Ascending aorta (tissue), 2 donors: ENCODE measurements at regions of chr6 and their contacts with region 1.

Region 1: DNA sequence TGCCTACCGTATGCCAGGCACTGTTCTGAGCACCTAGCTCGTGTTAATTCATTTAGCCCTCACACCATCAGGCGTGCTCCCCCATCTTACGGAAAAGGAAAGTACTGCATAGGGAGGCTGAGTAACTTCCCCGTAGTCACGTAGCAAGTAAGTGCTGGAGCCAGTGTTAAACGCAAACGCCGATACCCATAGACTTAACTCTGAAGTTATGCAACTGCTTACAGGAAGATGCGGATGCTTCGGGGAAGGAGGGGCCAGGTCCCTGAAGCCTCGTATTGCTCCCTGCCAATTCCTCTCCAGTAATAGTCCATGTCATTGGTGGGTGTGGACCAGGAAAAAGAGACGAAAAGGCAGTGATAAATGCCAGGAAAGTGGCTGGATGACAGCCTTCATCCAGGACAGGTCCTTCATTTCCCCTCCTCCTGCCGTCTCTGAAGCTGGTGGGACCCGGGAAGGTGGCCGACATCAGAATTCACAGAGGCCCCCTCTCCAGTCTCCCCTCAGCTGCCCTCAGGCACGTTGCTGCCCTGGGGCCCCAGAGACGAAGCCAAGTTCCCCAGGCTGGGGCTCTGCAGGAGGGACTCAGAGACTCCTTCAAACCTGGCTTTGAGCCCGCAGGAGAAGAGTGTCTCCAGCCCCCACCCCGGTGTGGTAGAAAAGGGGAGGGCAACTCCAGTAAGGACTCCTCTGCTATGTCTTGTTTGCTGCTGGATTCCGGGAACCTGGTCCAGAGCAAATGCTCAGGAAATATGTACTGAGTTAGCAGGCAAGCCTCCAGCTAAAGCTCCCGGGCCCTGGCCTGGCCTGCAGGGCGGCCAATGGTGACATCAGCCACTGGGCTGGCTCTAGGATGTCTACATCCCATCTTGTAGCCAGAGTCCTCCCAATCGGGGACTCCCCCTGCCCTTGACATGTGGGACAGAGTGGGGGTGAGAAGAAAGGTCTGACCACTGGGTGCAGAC is 37.8 kb downstream of the RAB44 start:
- DNase-seq: peak; percentile 59 to 93
- H3K4me3 ChIP-seq: peak overlapping the region; percentile 39 to 56
- H3K27ac ChIP-seq: peak overlapping the region; percentile 71 to 88
- H3K4me1 ChIP-seq: peaks cover 3 to 16% of the 10 kb centered on the region in 2 donors
- H3K27me3 ChIP-seq: no peaks in the 10 kb centered on the region
- CTCF ChIP-seq: peak; percentile 15 to 51 (median 40)

Region 2: DNA sequence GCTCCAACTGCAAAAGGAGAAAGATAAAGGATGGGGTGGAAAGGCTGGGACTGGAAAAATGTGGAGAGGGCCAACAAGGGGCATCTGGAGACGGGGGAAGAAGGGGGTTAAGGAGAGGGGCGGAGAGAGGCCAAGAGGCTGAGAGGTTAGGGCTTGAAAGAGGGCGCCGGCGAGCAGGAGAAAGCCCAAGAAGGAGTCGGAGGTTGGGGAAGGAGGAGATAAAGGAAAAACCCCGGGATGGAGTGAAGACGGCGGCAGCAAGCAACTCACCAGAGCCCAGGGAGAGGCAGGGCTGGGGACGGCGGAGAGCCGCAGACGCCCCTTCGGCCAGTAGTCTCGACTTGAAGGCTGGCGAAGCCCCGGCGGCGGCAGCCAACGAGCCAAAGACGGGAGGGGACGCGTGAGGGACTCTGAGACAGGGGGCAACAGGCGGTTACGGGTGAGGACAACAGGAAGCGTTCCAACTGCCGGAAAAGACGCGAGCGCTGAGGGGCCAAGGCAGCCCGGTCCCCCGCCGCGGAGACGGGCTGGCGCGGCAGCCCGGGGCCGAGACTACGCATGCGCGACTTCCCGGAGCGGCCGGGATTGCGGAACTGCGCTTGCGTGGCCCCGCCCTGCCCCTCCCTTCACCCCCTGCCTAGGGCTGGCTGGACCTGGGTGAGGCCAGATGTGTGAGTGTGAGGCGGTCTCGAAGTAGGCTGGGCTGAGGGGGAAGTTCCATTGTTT is 188.3 kb before region 1 on chr6 and contains the start of gene STK38:
- intact Hi-C with region 1: loop called (anchors 2 kb)
- DNase-seq: peak; percentile 65 to 94
- H3K4me3 ChIP-seq: peak within 1 kb of the TSS; percentile 69 to 98
- H3K27ac ChIP-seq: peak within 1 kb of the TSS; percentile 89 to 97
- H3K4me1 ChIP-seq: peaks cover 0 to 16% of the 10 kb centered on the region in 2 donors
- H3K27me3 ChIP-seq: no peaks in the 10 kb centered on the region
- CTCF ChIP-seq: no peak
- total RNA-seq, gene STK38: 10.5 TPM

Region 3: GRCh38 chr6:36563237-36563927 is 172.0 kb before region 1 on chr6:
- intact Hi-C with region 1: no loop called
- DNase-seq: no peak
- H3K4me3 ChIP-seq: no peak overlapping the region
- H3K27ac ChIP-seq: no peak overlapping the region
- H3K4me1 ChIP-seq: no peaks in the 10 kb centered on the region
- H3K27me3 ChIP-seq: no peaks in the 10 kb centered on the region
- CTCF ChIP-seq: no peak